ENCODE measurements at regions of chr14 and their contacts with region 1.

Region 1: GRCh38 chr14:77133720-77134338 is 7.8 kb downstream of the ZDHHC22 start:
- DNase-seq: peak in 8 of 9 donors; percentile 37 to 68 (median 45)
- ATAC-seq: peak; percentile 81
- H3K4me3 ChIP-seq: no peak overlapping the region
- H3K4me3 Mint-ChIP-seq: no peak overlapping the region
- H3K27ac ChIP-seq: no peak overlapping the region
- H3K27ac Mint-ChIP-seq: no peak overlapping the region
- H3K4me1 ChIP-seq: no peaks in the 10 kb centered on the region
- H3K4me1 Mint-ChIP-seq: peaks cover 3 to 8% (median 4%) of the 10 kb centered on the region in 7 donors
- H3K27me3 ChIP-seq: peaks cover 0 to 4% of the 10 kb centered on the region in 2 donors
- H3K27me3 Mint-ChIP-seq: peaks cover 65 to 87% (median 80%) of the 10 kb centered on the region in 5 donors

Region 2: GRCh38 chr14:77033622-77034521 is 100.0 kb before region 1 on chr14:
- CTCF ChIA-PET with region 1: no interaction called
- POLR2A ChIA-PET with region 1: no interaction called
- intact Hi-C with region 1: no loop called
- DNase-seq: peak in 7 of 9 donors; percentile 32 to 89 (median 47)
- ATAC-seq: peak; percentile 76
- H3K4me3 ChIP-seq: peak overlapping the region; percentile 79
- H3K4me3 Mint-ChIP-seq: peak overlapping the region; percentile 81 to 93 (median 90)
- H3K27ac ChIP-seq: peak overlapping the region; percentile 95
- H3K27ac Mint-ChIP-seq: peak overlapping the region; percentile 92 to 98 (median 94)
- H3K4me1 ChIP-seq: peaks cover 37 to 67% of the 10 kb centered on the region in 2 donors
- H3K4me1 Mint-ChIP-seq: peaks cover 45 to 85% (median 78%) of the 10 kb centered on the region in 7 donors
- H3K27me3 ChIP-seq: no peaks in the 10 kb centered on the region
- H3K27me3 Mint-ChIP-seq: no peaks in the 10 kb centered on the region

Region 3: DNA sequence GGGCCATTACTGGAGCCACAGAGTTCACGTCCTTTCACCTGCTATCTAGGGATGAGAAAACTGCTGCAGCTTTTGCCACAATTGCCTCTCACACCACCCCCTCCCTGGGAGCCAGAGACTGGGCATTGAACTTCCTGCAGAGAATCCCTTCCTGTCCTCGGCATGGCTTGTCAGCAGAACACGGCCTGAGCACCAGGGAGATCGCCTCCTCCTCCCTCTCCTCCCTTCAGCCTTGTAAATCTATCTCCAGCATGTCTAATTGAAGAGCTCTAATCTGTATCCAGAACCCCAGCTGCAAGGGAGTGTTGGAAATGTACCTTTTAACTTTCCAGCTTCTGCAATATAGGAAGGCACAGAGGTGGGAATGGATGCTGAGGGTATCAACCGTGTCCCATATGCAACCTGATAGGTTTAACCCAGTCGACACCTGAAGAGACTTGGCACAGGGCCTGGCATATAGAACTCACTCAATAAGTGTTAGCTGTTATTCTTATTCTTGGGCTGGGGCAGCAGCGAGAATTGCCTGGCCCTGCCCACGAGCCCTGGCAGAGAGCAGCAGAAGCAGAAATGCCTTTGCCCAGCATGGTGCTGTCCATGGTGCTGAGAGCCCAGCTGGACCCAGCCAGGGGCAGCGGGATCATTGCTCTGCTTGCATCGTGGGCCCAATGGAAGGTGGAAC is 74.6 kb after region 1 on chr14:
- CTCF ChIA-PET with region 1: no interaction called
- POLR2A ChIA-PET with region 1: no interaction called
- intact Hi-C with region 1: loop called in 1 of 2 experiments (anchors 1 kb)
- DNase-seq: peak in 7 of 9 donors; percentile 17 to 70 (median 41)
- ATAC-seq: no peak
- H3K4me3 ChIP-seq: no peak overlapping the region
- H3K4me3 Mint-ChIP-seq: no peak overlapping the region
- H3K27ac ChIP-seq: no peak overlapping the region
- H3K27ac Mint-ChIP-seq: no peak overlapping the region
- H3K4me1 ChIP-seq: no peaks in the 10 kb centered on the region
- H3K4me1 Mint-ChIP-seq: peaks cover 0 to 1% (median 0%) of the 10 kb centered on the region in 7 donors
- H3K27me3 ChIP-seq: no peaks in the 10 kb centered on the region
- H3K27me3 Mint-ChIP-seq: peaks cover 5 to 39% (median 8%) of the 10 kb centered on the region in 5 donors

Measured in naive thymus-derived CD4-positive, alpha-beta T cell (primary cell).